ENCODE measurements at regions of chr22 and their contacts with region 1.

Region 1: GRCh38 chr22:30326706-30327362 is at the start of gene TBC1D10A:
- DNase-seq: peak; percentile 84 to 91
- ATAC-seq: peak; percentile 90 to 97 (median 94)
- H3K4me3 ChIP-seq: peak within 1 kb of the TSS; percentile 64 to 100 (median 96)
- H3K27ac ChIP-seq: peak within 1 kb of the TSS; percentile 78 to 94 (median 89)
- H3K4me1 ChIP-seq: peaks cover 11 to 51% (median 43%) of the 10 kb centered on the region in 9 donors
- H3K27me3 ChIP-seq: no peaks in the 10 kb centered on the region
- CTCF ChIP-seq: no peak
- total RNA-seq, gene TBC1D10A: 3.2 to 7.5 (median 5.6) TPM

Region 2: GRCh38 chr22:30305519-30305905 is 21.3 kb before region 1 on chr22:
- intact Hi-C with region 1: loop called in 2 of 10 experiments (anchors 2 kb)
- DNase-seq: peak; percentile 68 to 78
- ATAC-seq: peak; percentile 77 to 90 (median 84)
- H3K4me3 ChIP-seq: peak overlapping the region in 3 of 10 donors; percentile 3 to 26 (median 7)
- H3K27ac ChIP-seq: peak overlapping the region; percentile 67 to 92 (median 80)
- H3K4me1 ChIP-seq: peaks cover 41 to 100% (median 98%) of the 10 kb centered on the region in 9 donors
- H3K27me3 ChIP-seq: no peaks in the 10 kb centered on the region
- CTCF ChIP-seq: no peak

Region 3: GRCh38 chr22:30356449-30357235 is 29.8 kb after region 1 on chr22 and contains the starts of genes CCDC157 and SF3A1:
- intact Hi-C with region 1: loop called in 1 of 10 experiments (anchors 1 kb)
- DNase-seq: peak; percentile 85 to 90
- ATAC-seq: peak; percentile 98 to 99 (median 98)
- H3K4me3 ChIP-seq: peak within 1 kb of the TSS; percentile 53 to 97 (median 83)
- H3K27ac ChIP-seq: peak within 1 kb of the TSS; percentile 88 to 99 (median 96)
- H3K4me1 ChIP-seq: peaks cover 11 to 42% (median 32%) of the 10 kb centered on the region in 9 donors
- H3K27me3 ChIP-seq: no peaks in the 10 kb centered on the region
- CTCF ChIP-seq: peak in 1 of 9 donors; percentile 17
- total RNA-seq, gene CCDC157: 0.11 to 1.2 (median 0.85) TPM
- total RNA-seq, gene SF3A1: 84.4 to 132 (median 111) TPM

Measured in heart right ventricle (tissue), 16 donors.